MCF 10A (cell line): ENCODE measurements at regions of chr7 and their contacts with region 1.

Region 1: DNA sequence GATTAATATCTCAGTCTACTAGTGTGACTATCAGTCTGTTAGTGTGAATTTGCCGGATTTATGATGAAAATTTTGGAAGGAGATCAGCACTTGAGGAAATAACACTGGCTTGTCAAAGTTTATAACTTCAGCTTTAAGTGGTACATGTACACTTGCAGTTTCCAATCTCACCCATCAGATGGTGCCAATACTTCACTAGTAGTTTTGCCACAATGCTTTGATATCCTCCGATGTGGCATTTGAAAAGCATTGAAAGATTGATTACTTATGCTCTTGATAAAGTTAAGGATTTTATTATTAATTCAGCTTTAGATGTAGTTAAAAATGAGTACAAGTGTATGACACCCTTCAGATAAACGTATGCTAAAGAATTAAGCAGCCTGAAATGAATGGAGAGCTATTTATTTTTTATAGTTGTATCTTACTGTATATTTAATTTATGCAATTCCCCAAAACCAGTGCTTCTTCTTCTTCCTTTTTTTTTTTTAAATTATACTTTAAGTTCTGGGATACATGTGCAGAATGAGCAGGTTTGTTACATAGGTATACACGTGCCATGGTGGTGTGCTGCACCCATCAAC is 98.2 kb downstream of the ANLN start:
- DNase-seq: peak; percentile 74
- H3K4me3 Mint-ChIP-seq: no peak overlapping the region
- H3K27ac Mint-ChIP-seq: no peak overlapping the region
- H3K4me1 Mint-ChIP-seq: peaks cover 16% of the 10 kb centered on the region
- H3K27me3 Mint-ChIP-seq: no peaks in the 10 kb centered on the region
- CTCF ChIP-seq: peak; percentile 93

Region 2: GRCh38 chr7:36473454-36474282 is 14.2 kb before region 1 on chr7:
- CTCF ChIA-PET with region 1: interaction called, 10 read pairs
- POLR2A ChIA-PET with region 1: interaction called, 3 read pairs
- intact Hi-C with region 1: no loop called
- DNase-seq: peak; percentile 91
- H3K4me3 Mint-ChIP-seq: peak overlapping the region; percentile 20
- H3K27ac Mint-ChIP-seq: peak overlapping the region; percentile 14
- H3K4me1 Mint-ChIP-seq: peaks cover 19% of the 10 kb centered on the region
- H3K27me3 Mint-ChIP-seq: no peaks in the 10 kb centered on the region
- CTCF ChIP-seq: peak; percentile 39

Region 3: DNA sequence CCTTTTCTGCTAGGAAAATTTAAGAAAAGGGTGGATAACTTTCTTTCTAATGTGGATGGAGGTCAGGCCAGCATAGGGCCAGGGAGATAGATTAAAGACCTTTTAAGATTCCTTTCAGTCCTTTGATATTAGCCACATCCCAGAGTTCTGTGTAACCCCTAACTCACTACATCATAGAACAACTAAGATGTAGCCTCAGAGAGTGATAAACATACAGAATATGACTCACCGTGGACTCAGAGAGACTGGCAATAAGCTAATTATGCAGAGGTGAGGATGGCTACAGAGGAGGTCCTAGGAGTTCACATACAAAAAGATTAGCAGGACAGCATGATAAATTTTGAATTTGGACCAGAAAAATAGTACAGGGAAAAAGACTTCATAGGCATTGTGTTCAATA is 95.5 kb after region 1 on chr7:
- CTCF ChIA-PET with region 1: interaction called, 3 read pairs
- POLR2A ChIA-PET with region 1: no interaction called
- intact Hi-C with region 1: loop called (anchors 2 kb)
- DNase-seq: peak; percentile 30
- H3K4me3 Mint-ChIP-seq: no peak overlapping the region
- H3K27ac Mint-ChIP-seq: peak overlapping the region; percentile 87
- H3K4me1 Mint-ChIP-seq: peaks cover 19% of the 10 kb centered on the region
- H3K27me3 Mint-ChIP-seq: no peaks in the 10 kb centered on the region
- CTCF ChIP-seq: no peak

Region 4: DNA sequence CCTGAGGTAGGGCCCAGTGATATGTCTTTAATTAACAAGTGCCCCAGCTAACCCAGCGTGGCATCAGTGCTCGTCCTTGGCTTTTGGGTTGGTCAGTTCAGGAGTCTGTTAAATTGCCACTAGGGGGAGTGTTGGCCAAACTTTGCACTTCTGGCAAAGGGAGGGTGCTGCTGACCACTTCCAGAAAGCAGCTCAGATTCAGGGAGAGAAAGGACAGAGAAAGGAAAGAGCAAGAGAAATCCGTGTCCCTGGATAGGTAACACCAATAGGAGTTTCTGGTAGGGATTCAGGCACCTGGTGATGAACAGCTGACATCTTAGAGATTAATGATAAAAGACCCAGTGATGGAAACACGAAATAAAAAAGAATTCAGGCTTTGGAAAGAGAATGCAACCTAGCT is 479.5 kb after region 1 on chr7:
- CTCF ChIA-PET with region 1: interaction called, 6 read pairs
- POLR2A ChIA-PET with region 1: no interaction called
- intact Hi-C with region 1: loop called (anchors 2 kb)
- DNase-seq: peak; percentile 73
- H3K4me3 Mint-ChIP-seq: no peak overlapping the region
- H3K27ac Mint-ChIP-seq: no peak overlapping the region
- H3K4me1 Mint-ChIP-seq: no peaks in the 10 kb centered on the region
- H3K27me3 Mint-ChIP-seq: no peaks in the 10 kb centered on the region
- CTCF ChIP-seq: peak; percentile 71